PC-9 (cell line): ENCODE measurements at regions of chr7 and their contacts with region 1.

Region 1: GRCh38 chr7:26500749-26501352 is 209.2 kb downstream of the SNX10 start:
- DNase-seq: peak in 1 of 2 experiments; percentile 48
- H3K4me3 ChIP-seq: no peak overlapping the region
- H3K27ac ChIP-seq: no peak overlapping the region
- H3K4me1 ChIP-seq: no peaks in the 10 kb centered on the region
- H3K27me3 ChIP-seq: no peaks in the 10 kb centered on the region
- CTCF ChIP-seq: peak; percentile 73

Region 2: GRCh38 chr7:25399000-25399750 is 1101.7 kb before region 1 on chr7:
- CTCF ChIA-PET with region 1: interaction called, 13 read pairs
- POLR2A ChIA-PET with region 1: no interaction called
- intact Hi-C with region 1: no loop called
- DNase-seq: no peak
- H3K4me3 ChIP-seq: no peak overlapping the region
- H3K27ac ChIP-seq: no peak overlapping the region
- H3K4me1 ChIP-seq: no peaks in the 10 kb centered on the region
- H3K27me3 ChIP-seq: peaks cover 87% of the 10 kb centered on the region
- CTCF ChIP-seq: no peak

Region 3: GRCh38 chr7:26398756-26399501 is 101.9 kb before region 1 on chr7:
- CTCF ChIA-PET with region 1: no interaction called
- POLR2A ChIA-PET with region 1: no interaction called
- intact Hi-C with region 1: loop called (anchors 5 kb)
- DNase-seq: peak; percentile 63 to 83
- H3K4me3 ChIP-seq: peak overlapping the region; percentile 71
- H3K27ac ChIP-seq: peak overlapping the region; percentile 36
- H3K4me1 ChIP-seq: peaks cover 9% of the 10 kb centered on the region
- H3K27me3 ChIP-seq: no peaks in the 10 kb centered on the region
- CTCF ChIP-seq: peak; percentile 54; the same call in 1 of the 2 replicates